ENCODE measurements at regions of chr10 and their contacts with region 1.

Region 1: DNA sequence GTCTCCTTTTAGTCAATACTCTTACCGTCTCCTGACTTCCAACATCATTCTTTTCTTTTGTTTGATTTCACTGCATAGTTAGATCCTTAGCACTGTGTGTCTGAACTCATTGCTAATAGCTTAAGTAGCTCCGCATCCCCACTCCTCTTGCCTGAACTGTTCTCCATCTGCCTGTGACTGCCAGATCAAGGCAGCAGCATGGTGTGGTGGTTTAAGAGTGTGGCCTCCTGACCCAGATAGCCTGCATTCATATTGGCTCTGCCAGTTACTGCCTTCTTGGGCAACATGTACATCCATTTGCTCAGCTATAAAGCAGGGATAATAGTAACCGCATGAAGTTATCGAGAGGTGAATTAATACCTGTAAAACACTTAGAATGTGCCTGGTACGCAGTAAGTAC is 50.8 kb downstream of the SUFU start:
- DNase-seq: no peak
- H3K4me3 ChIP-seq: no peak overlapping the region
- H3K27ac ChIP-seq: no peak overlapping the region
- H3K4me1 ChIP-seq: no peaks in the 10 kb centered on the region
- H3K27me3 ChIP-seq: no peaks in the 10 kb centered on the region; a peak in 1 of 7 replicates
- CTCF ChIP-seq: no peak
- EP300 ChIP-seq: no peak
- POLR2A ChIP-seq: no peak
- RAD21 ChIP-seq: no peak

Region 2: GRCh38 chr10:102432162-102432950 is 122.2 kb before region 1 on chr10 and contains the start of gene CUEDC2:
- CTCF ChIA-PET with region 1: no interaction called
- POLR2A ChIA-PET with region 1: no interaction called
- DNase-seq: peak; percentile 90 to 100
- H3K4me3 ChIP-seq: peak within 1 kb of the TSS; percentile 66 to 92 (median 84)
- H3K27ac ChIP-seq: peak within 1 kb of the TSS; percentile 72; the same call in 1 of the 2 replicates
- H3K4me1 ChIP-seq: peaks cover 0 to 18% (median 13%) of the 10 kb centered on the region in 4 experiments; a peak in 6 of 7 replicates
- H3K27me3 ChIP-seq: peaks cover 13 to 37% (median 34%) of the 10 kb centered on the region in 4 experiments
- CTCF ChIP-seq: no peak
- EP300 ChIP-seq: no peak
- POLR2A ChIP-seq: peak; percentile 34 to 84
- RAD21 ChIP-seq: peak in 1 of 2 experiments; percentile 5; a peak in 1 of 4 replicates
- total RNA-seq, gene CUEDC2: 41.7 and 43.6 TPM in 2 replicates

Region 3: GRCh38 chr10:102565793-102566192 is 11.3 kb after region 1 on chr10:
- CTCF ChIA-PET with region 1: interaction called, 10 read pairs
- POLR2A ChIA-PET with region 1: no interaction called
- DNase-seq: peak; percentile 77 to 78
- H3K4me3 ChIP-seq: no peak overlapping the region
- H3K27ac ChIP-seq: no peak overlapping the region
- H3K4me1 ChIP-seq: 0 out of 7 replicates have a peak, but pooled peaks cover 0 to 3% (median 0%) of the 10 kb centered on the region in 4 experiments
- H3K27me3 ChIP-seq: peaks cover 10 to 49% (median 37%) of the 10 kb centered on the region in 4 experiments
- CTCF ChIP-seq: peak; percentile 56 to 88 (median 63)
- EP300 ChIP-seq: 0 out of 3 replicates have a peak, but pooled peaks of 1 of the 2 experiments have one; percentile 50
- POLR2A ChIP-seq: no peak
- RAD21 ChIP-seq: peak; percentile 58 to 69

Region 4: DNA sequence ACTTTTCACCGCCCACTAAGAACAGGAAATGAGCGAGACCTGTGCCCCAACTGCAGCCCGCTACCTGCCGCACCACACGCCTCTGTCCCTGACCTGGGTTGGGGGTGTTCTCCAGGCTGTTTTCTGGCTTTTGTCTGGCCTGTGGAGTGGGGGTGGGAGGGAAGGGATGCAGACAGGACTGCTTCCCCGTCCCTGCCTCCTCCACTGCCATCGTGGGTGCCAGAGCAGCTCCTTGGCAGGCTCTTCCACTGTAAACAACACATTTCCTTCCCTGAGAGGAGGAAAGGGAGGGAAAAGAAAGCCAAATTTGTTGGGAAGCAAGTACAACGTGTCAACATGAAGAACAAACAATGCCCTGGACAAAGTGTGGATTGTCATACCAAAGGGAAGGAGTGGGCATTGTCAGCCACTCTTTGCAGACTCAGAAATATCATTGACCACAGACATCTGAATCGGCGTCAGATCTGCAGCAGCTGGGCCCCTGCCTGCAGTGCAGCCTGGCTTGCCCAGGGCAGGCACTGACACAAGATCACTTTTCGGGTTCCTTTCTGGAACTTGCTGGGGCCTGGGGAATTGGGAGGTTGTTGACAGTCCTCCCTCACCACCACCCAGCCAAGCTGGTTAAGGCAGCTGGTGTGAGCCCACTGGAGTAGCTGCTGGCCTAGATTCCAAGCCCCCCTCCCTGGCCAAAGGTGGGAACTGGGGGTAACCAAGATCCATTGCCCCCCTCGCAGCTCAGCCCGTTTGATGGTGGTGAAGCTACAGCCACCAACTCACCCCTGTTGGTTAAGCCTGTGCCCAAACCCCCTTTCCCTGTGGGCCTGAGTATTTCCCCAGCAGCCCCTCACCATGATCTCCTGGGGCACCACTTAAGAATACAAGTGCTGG is 67.2 kb after region 1 on chr10:
- CTCF ChIA-PET with region 1: no interaction called
- POLR2A ChIA-PET with region 1: no interaction called
- DNase-seq: no peak
- H3K4me3 ChIP-seq: no peak overlapping the region
- H3K27ac ChIP-seq: no peak overlapping the region
- H3K4me1 ChIP-seq: peaks cover 2 to 11% (median 7%) of the 10 kb centered on the region in 4 experiments
- H3K27me3 ChIP-seq: no peaks in the 10 kb centered on the region
- CTCF ChIP-seq: no peak
- EP300 ChIP-seq: no peak
- POLR2A ChIP-seq: no peak
- RAD21 ChIP-seq: no peak